Common myeloid progenitor, CD34-positive (primary cell): ENCODE measurements at regions of chr1 and their contacts with region 1.

Region 1: GRCh38 chr1:44707959-44708831 is 22.8 kb downstream of the RNU5D-1 start:
- DNase-seq: peak; percentile 63 to 75 (median 71)
- H3K4me3 ChIP-seq: peak overlapping the region in 3 of 7 experiments; percentile 6 to 31 (median 20)
- H3K27ac ChIP-seq: no peak overlapping the region
- H3K4me1 ChIP-seq: peaks cover 0 to 14% (median 7%) of the 10 kb centered on the region in 4 experiments
- H3K27me3 ChIP-seq: no peaks in the 10 kb centered on the region

Region 2: GRCh38 chr1:44674113-44675000 is 33.8 kb before region 1 on chr1 and contains the starts of genes ARMH1 and TMEM53:
- CTCF ChIA-PET with region 1: interaction called, 11 read pairs
- POLR2A ChIA-PET with region 1: no interaction called
- DNase-seq: peak; percentile 99
- H3K4me3 ChIP-seq: peak within 1 kb of the TSS; percentile 63 to 92 (median 81)
- H3K27ac ChIP-seq: peak within 1 kb of the TSS; percentile 59 to 84
- H3K4me1 ChIP-seq: peaks cover 22 to 76% (median 53%) of the 10 kb centered on the region in 4 experiments
- H3K27me3 ChIP-seq: no peaks in the 10 kb centered on the region

Region 3: DNA sequence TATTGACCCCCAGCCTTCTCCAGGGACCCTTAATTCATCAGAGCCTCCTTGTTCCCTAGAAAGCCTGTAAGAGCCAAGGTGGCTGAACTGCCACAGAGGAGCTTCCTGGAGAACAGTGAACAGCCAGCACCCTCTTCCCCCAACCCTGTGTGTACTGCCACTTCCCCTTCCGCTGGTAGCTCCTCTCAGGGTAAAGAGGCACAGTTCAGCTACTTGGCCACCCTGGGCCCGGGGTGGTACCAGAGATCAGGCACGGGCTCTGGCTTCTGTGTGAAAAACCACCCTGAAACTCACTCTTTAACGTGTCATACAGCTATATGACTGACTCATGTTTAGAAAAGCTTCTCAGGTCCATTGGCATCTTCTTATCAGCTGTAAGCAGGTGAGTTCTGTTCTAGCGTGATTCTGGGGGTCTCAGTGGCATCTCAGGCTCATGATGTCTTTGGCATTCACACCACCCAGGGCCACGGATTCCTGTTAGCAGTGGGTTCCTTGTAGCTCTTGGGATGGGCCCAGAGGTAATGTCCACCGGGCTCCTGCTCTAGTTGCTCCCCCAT is 11.3 kb before region 1 on chr1:
- CTCF ChIA-PET with region 1: interaction called, 18 read pairs
- POLR2A ChIA-PET with region 1: no interaction called
- DNase-seq: peak in 2 of 3 donors; percentile 56 to 68
- H3K4me3 ChIP-seq: no peak overlapping the region
- H3K27ac ChIP-seq: no peak overlapping the region
- H3K4me1 ChIP-seq: peaks cover 0 to 34% (median 19%) of the 10 kb centered on the region in 4 experiments
- H3K27me3 ChIP-seq: no peaks in the 10 kb centered on the region